ENCODE measurements at regions of chr1 and their contacts with region 1.

Region 1: GRCh38 chr1:186304982-186305949 is 69.8 kb downstream of the TPR start:
- DNase-seq: peak; percentile 45
- H3K4me3 Mint-ChIP-seq: no peak overlapping the region
- H3K27ac Mint-ChIP-seq: peak overlapping the region; percentile 95
- H3K4me1 Mint-ChIP-seq: peaks cover 63% of the 10 kb centered on the region
- H3K27me3 Mint-ChIP-seq: no peaks in the 10 kb centered on the region

Region 2: GRCh38 chr1:184754476-184755225 is 1550.6 kb before region 1 on chr1 and contains the start of gene EDEM3:
- CTCF ChIA-PET with region 1: no interaction called
- intact Hi-C with region 1: loop called (anchors 10 kb)
- DNase-seq: peak; percentile 98
- H3K4me3 Mint-ChIP-seq: peak within 1 kb of the TSS; percentile 88
- H3K27ac Mint-ChIP-seq: peak within 1 kb of the TSS; percentile 88
- H3K4me1 Mint-ChIP-seq: peaks cover 36% of the 10 kb centered on the region
- H3K27me3 Mint-ChIP-seq: no peaks in the 10 kb centered on the region
- total RNA-seq, gene EDEM3: 9.9 to 10.5 TPM

Region 3: GRCh38 chr1:186009039-186009737 is 296.1 kb before region 1 on chr1:
- CTCF ChIA-PET with region 1: no interaction called
- intact Hi-C with region 1: loop called (anchors 5 kb)
- DNase-seq: no peak
- H3K4me3 Mint-ChIP-seq: no peak overlapping the region
- H3K27ac Mint-ChIP-seq: peak overlapping the region; percentile 53
- H3K4me1 Mint-ChIP-seq: peaks cover 4% of the 10 kb centered on the region
- H3K27me3 Mint-ChIP-seq: no peaks in the 10 kb centered on the region

Region 4: DNA sequence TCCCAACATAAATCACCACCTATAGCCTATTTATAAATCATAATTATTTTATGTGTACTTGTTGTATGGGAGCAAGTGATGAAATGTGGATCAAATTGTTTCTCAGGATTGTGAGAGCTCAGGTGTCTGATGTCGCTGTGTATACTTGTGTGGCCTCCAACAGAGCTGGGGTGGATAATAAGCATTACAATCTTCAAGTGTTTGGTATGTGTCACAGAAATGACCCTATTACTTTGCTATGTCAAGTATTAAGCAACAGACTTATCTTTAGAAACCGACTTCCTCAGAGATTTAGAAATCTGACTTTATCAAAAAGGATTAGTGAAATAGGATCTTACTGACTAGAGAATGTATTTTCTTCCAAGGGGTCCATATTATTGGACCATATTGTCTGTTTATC is 211.1 kb before region 1 on chr1:
- CTCF ChIA-PET with region 1: no interaction called
- intact Hi-C with region 1: no loop called
- DNase-seq: no peak
- H3K4me3 Mint-ChIP-seq: no peak overlapping the region
- H3K27ac Mint-ChIP-seq: no peak overlapping the region
- H3K4me1 Mint-ChIP-seq: no peaks in the 10 kb centered on the region
- H3K27me3 Mint-ChIP-seq: peaks cover 18% of the 10 kb centered on the region

Region 5: GRCh38 chr1:186231962-186232361 is 73.3 kb before region 1 on chr1:
- CTCF ChIA-PET with region 1: no interaction called
- intact Hi-C with region 1: no loop called
- DNase-seq: no peak
- H3K4me3 Mint-ChIP-seq: no peak overlapping the region
- H3K27ac Mint-ChIP-seq: no peak overlapping the region
- H3K4me1 Mint-ChIP-seq: no peaks in the 10 kb centered on the region
- H3K27me3 Mint-ChIP-seq: peaks cover 4% of the 10 kb centered on the region

Region 6: GRCh38 chr1:186283374-186283773 is 21.9 kb before region 1 on chr1:
- CTCF ChIA-PET with region 1: interaction called, 81 read pairs
- intact Hi-C with region 1: no loop called
- DNase-seq: peak; percentile 46
- H3K4me3 Mint-ChIP-seq: peak overlapping the region; percentile 48
- H3K27ac Mint-ChIP-seq: peak overlapping the region; percentile 99
- H3K4me1 Mint-ChIP-seq: peaks cover 74% of the 10 kb centered on the region
- H3K27me3 Mint-ChIP-seq: no peaks in the 10 kb centered on the region

Region 7: GRCh38 chr1:186289943-186290545 is 15.2 kb before region 1 on chr1:
- CTCF ChIA-PET with region 1: interaction called, 81 read pairs
- intact Hi-C with region 1: loop called (anchors 1 kb)
- DNase-seq: peak; percentile 55
- H3K4me3 Mint-ChIP-seq: peak overlapping the region; percentile 43
- H3K27ac Mint-ChIP-seq: peak overlapping the region; percentile 99
- H3K4me1 Mint-ChIP-seq: peaks cover 90% of the 10 kb centered on the region
- H3K27me3 Mint-ChIP-seq: no peaks in the 10 kb centered on the region

Region 8: DNA sequence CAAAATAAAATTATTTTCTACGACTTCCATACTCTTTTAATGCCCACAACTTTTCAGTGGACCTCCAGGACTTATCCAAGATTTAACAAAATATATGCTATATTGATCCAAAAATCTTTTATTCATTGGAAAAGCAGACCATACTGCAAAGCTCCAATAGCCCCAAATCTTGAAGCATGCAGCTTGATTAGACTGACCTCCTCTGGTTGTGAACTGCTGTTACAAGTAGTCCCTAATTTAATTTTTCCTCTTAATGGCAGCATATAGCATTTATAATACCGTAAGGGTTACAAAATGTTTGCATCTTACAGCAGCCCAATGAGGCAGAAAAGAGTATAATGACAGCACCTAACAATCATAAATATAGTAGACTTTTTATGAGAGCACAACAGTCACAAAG is 20.0 kb after region 1 on chr1:
- CTCF ChIA-PET with region 1: interaction called, 15 read pairs
- intact Hi-C with region 1: loop called (anchors 1 kb)
- DNase-seq: no peak
- H3K4me3 Mint-ChIP-seq: no peak overlapping the region
- H3K27ac Mint-ChIP-seq: no peak overlapping the region
- H3K4me1 Mint-ChIP-seq: peaks cover 39% of the 10 kb centered on the region
- H3K27me3 Mint-ChIP-seq: no peaks in the 10 kb centered on the region

Region 9: GRCh38 chr1:186618401-186619170 is 313.3 kb after region 1 on chr1:
- CTCF ChIA-PET with region 1: no interaction called
- intact Hi-C with region 1: loop called (anchors 5 kb)
- DNase-seq: peak; percentile 77
- H3K4me3 Mint-ChIP-seq: no peak overlapping the region
- H3K27ac Mint-ChIP-seq: no peak overlapping the region
- H3K4me1 Mint-ChIP-seq: peaks cover 42% of the 10 kb centered on the region
- H3K27me3 Mint-ChIP-seq: peaks cover 2% of the 10 kb centered on the region

Measured in activated naive CD4-positive, alpha-beta T cell treated with anti-CD3 and anti-CD28 coated beads for 36 hours (primary cell).